ENCODE measurements at regions of chr20 and their contacts with region 1.

Region 1: GRCh38 chr20:33653218-33653899 is 8.8 kb upstream of the C20orf144 start:
- DNase-seq: peak; percentile 84

Region 2: GRCh38 chr20:33415948-33416347 is 237.4 kb before region 1 on chr20:
- intact Hi-C with region 1: loop called in 1 of 2 experiments (anchors 10 kb)
- DNase-seq: no peak

Region 3: DNA sequence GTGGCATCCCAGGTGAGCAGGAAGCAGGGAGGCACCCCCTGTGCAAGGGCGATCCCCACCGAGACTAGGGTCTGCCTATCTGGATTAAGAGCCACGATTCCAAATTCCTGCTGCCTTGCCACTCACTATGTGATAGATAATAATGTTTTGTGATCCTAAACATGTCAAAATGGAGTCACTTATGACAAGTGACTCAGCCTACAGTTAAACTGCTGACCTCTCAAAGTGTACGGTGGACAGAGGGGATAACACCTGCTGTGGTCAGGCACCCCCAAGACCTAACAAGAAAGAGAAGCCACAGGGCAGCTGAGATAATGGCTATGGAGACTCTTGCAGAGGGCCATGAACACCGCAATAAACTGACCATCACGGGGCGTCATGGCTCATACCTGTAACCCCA is 193.8 kb before region 1 on chr20:
- intact Hi-C with region 1: loop called (anchors 5 to 10 kb)
- DNase-seq: no peak

Region 4: GRCh38 chr20:33465481-33466302 is 187.7 kb before region 1 on chr20:
- intact Hi-C with region 1: loop called in 1 of 2 experiments (anchors 10 kb)
- DNase-seq: no peak

Region 5: GRCh38 chr20:34880095-34880680 is 1226.8 kb after region 1 on chr20:
- intact Hi-C with region 1: no loop called
- DNase-seq: no peak

Region 6: GRCh38 chr20:35369804-35370203 is 1716.4 kb after region 1 on chr20:
- intact Hi-C with region 1: loop called in 1 of 2 experiments (anchors 5 kb)
- DNase-seq: no peak